Psoas muscle (tissue), 8 donors: ENCODE measurements at regions of chr5 and their contacts with region 1.

Region 1: GRCh38 chr5:90421136-90421535 is 11.6 kb upstream of the CETN3 start:
- DNase-seq: no peak
- ATAC-seq: peak in 2 of 4 donors; percentile 27 to 40
- H3K4me3 ChIP-seq: no peak overlapping the region
- H3K27ac ChIP-seq: no peak overlapping the region
- H3K4me1 ChIP-seq: no peaks in the 10 kb centered on the region
- H3K27me3 ChIP-seq: peaks cover 0 to 1% (median 0%) of the 10 kb centered on the region in 3 donors
- CTCF ChIP-seq: no peak

Region 2: DNA sequence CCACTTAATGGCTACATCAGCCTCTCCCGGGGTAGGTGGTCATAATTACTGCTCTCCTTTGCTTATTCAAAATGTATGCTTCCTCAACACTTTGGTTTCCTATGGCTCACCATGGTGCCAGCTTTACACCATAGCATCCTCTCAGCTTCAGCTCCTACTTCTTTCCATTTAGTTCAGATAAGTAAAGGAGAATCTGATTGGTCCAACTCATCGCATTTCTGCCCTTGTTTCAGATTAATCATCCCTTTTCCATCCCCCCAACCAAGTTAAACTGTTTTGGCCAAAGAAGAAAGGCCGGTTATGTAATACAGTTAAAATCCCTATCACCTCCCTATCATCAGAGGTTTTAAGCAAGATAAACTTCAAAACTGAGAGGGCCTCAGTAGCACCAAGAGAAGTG is 142.0 kb before region 1 on chr5:
- intact Hi-C with region 1: no loop called
- DNase-seq: no peak
- ATAC-seq: no peak
- H3K4me3 ChIP-seq: no peak overlapping the region
- H3K27ac ChIP-seq: no peak overlapping the region
- H3K4me1 ChIP-seq: no peaks in the 10 kb centered on the region
- H3K27me3 ChIP-seq: no peaks in the 10 kb centered on the region
- CTCF ChIP-seq: no peak

Region 3: DNA sequence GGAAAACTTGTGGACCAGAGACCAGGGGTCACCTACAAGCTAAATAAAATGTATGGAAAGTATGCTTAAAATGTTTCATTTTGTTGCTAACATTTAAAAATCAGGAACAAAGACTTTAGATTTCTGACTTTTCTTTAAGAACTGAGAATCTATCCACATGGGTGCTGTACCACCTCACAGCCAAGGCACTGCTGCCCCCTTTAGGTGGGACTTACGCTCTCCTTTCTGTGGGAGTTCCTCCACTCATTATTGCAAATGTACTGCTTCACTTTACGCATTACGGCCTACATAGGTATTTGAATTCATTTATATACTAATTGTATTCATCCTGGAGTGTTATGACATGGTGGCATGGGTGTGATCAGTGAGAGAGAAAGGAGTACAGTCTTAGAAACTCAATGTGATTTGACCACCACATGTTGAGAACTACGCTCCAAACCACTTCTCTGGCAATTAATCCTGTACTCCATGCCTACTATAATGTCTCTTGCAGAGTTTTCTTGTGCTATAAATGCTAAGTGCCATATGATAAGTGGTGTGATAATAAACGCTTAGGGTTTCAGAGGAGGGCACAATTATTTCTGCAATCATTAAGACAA is 13.1 kb after region 1 on chr5:
- intact Hi-C with region 1: loop called in 1 of 2 experiments (anchors 1 kb)
- DNase-seq: peak in 1 of 2 donors; percentile 56
- ATAC-seq: no peak
- H3K4me3 ChIP-seq: no peak overlapping the region
- H3K27ac ChIP-seq: no peak overlapping the region
- H3K4me1 ChIP-seq: no peaks in the 10 kb centered on the region
- H3K27me3 ChIP-seq: no peaks in the 10 kb centered on the region
- CTCF ChIP-seq: peak; percentile 54